AG04450 (cell line): ENCODE measurements at regions of chr9 and their contacts with region 1.

Region 1: GRCh38 chr9:19490269-19490668 is 81.5 kb downstream of the ACER2 start:
- DNase-seq: no peak
- H3K4me3 ChIP-seq: no peak overlapping the region
- H3K27ac ChIP-seq: no peak overlapping the region
- H3K27me3 ChIP-seq: peaks cover 22% of the 10 kb centered on the region
- CTCF ChIP-seq: no peak

Region 2: DNA sequence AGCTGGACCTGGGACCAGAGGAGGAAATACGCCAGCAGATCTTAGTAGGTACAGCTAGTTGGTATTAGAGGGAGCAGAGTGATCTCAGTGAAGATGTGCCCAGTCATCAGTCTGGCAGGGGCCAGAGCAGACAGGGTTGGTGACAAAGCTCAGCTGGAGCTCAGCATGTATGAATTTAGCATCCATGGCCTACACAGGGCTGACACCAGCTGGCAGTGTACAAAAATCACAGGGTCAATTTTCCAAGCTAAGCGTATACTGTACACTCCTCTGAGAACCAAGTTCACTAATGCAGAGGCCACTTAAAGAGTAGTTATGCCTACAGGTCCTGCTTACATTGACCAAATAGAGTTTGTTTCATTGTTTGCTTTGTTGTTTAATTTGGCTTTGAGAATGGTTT is 152.0 kb after region 1 on chr9:
- CTCF ChIA-PET with region 1: interaction called, 12 read pairs
- POLR2A ChIA-PET with region 1: no interaction called
- DNase-seq: no peak
- H3K4me3 ChIP-seq: no peak overlapping the region
- H3K27ac ChIP-seq: no peak overlapping the region
- H3K27me3 ChIP-seq: no peaks in the 10 kb centered on the region
- CTCF ChIP-seq: no peak